ENCODE measurements at regions of chrX and their contacts with region 1.

Region 1: GRCh38 chrX:118603981-118604380 is 108.4 kb downstream of the DOCK11 start:
- DNase-seq: peak in 7 of 9 experiments; percentile 11 to 67 (median 29)
- ATAC-seq: peak; percentile 77
- H3K4me3 ChIP-seq: no peak overlapping the region
- H3K4me3 Mint-ChIP-seq: no peak overlapping the region
- H3K27ac ChIP-seq: no peak overlapping the region
- H3K27ac Mint-ChIP-seq: peak overlapping the region; percentile 85
- H3K4me1 ChIP-seq: no peaks in the 10 kb centered on the region
- H3K4me1 Mint-ChIP-seq: peaks cover 26% of the 10 kb centered on the region
- H3K27me3 ChIP-seq: no peaks in the 10 kb centered on the region
- H3K27me3 Mint-ChIP-seq: no peaks in the 10 kb centered on the region
- CTCF ChIP-seq: peak; percentile 67

Region 2: DNA sequence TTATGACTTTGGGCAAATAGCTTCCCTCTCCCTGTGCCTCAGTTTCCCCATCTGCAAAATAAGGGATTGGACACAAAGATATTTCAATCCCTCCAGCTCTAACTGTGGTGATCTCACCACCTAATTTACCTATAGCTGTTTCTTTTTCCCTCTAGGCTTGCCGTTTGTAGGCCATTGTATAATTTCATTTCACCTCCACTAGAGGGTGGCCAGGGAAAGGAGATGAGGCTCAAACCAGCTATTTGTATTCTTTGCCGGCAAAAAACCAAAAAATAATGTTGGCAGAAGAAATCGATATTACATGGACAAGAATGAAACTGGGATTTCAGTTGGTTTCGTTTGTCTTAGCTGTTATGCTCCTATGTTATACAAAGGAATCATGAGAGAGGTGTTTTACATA is 144.5 kb before region 1 on chrX:
- CTCF ChIA-PET with region 1: interaction called, 50 read pairs
- POLR2A ChIA-PET with region 1: no interaction called
- intact Hi-C with region 1: loop called (anchors 1 kb)
- DNase-seq: peak in 4 of 9 experiments; percentile 18 to 65 (median 37)
- ATAC-seq: peak; percentile 72
- H3K4me3 ChIP-seq: no peak overlapping the region
- H3K4me3 Mint-ChIP-seq: no peak overlapping the region
- H3K27ac ChIP-seq: no peak overlapping the region
- H3K27ac Mint-ChIP-seq: no peak overlapping the region
- H3K4me1 ChIP-seq: no peaks in the 10 kb centered on the region
- H3K4me1 Mint-ChIP-seq: peaks cover 4% of the 10 kb centered on the region
- H3K27me3 ChIP-seq: no peaks in the 10 kb centered on the region
- H3K27me3 Mint-ChIP-seq: no peaks in the 10 kb centered on the region
- CTCF ChIP-seq: peak; percentile 45

Region 3: DNA sequence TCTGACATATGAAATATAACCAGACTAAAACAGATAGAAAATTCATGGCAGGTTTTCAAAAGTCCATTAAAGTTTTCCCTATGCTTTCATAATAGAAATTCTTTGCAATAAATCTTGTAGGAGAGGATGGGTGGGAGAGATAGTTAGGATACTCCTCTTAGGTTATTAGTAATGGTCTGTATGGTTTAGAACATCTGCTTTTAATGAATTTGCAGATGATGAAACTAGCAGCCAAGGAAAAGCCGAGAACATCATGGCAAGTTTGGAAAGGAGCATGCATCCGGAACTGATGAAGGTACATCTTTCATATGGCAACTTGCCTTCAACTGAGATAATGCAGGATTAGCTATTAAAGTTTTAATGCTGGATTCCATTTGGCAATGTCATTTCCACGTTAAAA is 37.6 kb before region 1 on chrX:
- CTCF ChIA-PET with region 1: interaction called, 3 read pairs
- POLR2A ChIA-PET with region 1: no interaction called
- intact Hi-C with region 1: loop called in 1 of 2 experiments (anchors 5 kb)
- DNase-seq: no peak
- ATAC-seq: no peak
- H3K4me3 ChIP-seq: no peak overlapping the region
- H3K4me3 Mint-ChIP-seq: no peak overlapping the region
- H3K27ac ChIP-seq: no peak overlapping the region
- H3K27ac Mint-ChIP-seq: peak overlapping the region; percentile 72
- H3K4me1 ChIP-seq: no peaks in the 10 kb centered on the region
- H3K4me1 Mint-ChIP-seq: peaks cover 16% of the 10 kb centered on the region
- H3K27me3 ChIP-seq: no peaks in the 10 kb centered on the region
- H3K27me3 Mint-ChIP-seq: no peaks in the 10 kb centered on the region
- CTCF ChIP-seq: no peak

Region 4: DNA sequence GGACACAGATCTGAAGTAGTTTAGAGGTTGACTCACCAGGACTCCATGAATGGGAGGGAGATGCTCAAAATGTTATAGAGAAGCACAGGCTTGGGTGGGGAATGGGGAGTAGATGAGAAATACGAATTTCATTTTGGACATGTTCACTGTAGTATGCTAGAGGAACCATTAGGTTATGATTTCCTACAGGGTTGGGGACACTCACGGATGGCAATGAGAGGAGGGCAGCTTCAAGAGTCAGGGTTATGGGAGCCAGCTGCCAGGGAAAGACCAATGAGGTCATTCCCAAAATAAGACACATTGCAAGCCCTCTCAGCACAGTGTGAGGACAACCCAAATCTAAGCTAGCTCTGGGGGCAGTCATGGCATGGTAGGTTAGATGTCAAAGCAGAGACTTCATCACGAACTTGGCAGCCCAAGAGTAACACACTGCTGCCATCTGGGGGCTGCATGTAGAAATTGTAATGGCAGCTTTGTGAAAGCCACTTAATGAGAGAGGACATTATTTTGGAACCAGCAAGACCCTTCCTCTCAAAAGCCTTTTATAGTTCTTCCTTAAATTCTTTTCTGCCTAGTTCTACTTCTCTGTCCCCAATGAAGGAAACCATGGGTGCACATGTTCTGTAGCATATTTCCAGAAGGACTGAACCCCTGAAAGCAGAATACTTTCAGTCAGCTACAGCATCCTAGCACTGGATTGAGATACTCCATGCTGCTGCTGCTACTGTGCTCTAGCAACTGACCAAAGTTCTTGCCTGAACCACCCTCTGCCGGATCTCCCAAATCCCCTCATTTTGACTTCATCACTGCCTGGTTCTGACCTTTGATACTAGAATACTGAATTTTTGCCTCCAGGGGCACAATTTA is 203.4 kb after region 1 on chrX:
- CTCF ChIA-PET with region 1: no interaction called
- POLR2A ChIA-PET with region 1: no interaction called
- intact Hi-C with region 1: loop called (anchors 2 to 5 kb)
- DNase-seq: peak in 5 of 9 experiments; percentile 10 to 56 (median 20)
- ATAC-seq: peak; percentile 51
- H3K4me3 ChIP-seq: no peak overlapping the region
- H3K4me3 Mint-ChIP-seq: no peak overlapping the region
- H3K27ac ChIP-seq: no peak overlapping the region
- H3K27ac Mint-ChIP-seq: no peak overlapping the region
- H3K4me1 ChIP-seq: no peaks in the 10 kb centered on the region
- H3K4me1 Mint-ChIP-seq: no peaks in the 10 kb centered on the region
- H3K27me3 ChIP-seq: no peaks in the 10 kb centered on the region
- H3K27me3 Mint-ChIP-seq: peaks cover 8% of the 10 kb centered on the region
- CTCF ChIP-seq: peak; percentile 25

Measured in CD8-positive, alpha-beta T cell (primary cell).